ENCODE measurements at regions of chr3 and their contacts with region 1.

Region 1: DNA sequence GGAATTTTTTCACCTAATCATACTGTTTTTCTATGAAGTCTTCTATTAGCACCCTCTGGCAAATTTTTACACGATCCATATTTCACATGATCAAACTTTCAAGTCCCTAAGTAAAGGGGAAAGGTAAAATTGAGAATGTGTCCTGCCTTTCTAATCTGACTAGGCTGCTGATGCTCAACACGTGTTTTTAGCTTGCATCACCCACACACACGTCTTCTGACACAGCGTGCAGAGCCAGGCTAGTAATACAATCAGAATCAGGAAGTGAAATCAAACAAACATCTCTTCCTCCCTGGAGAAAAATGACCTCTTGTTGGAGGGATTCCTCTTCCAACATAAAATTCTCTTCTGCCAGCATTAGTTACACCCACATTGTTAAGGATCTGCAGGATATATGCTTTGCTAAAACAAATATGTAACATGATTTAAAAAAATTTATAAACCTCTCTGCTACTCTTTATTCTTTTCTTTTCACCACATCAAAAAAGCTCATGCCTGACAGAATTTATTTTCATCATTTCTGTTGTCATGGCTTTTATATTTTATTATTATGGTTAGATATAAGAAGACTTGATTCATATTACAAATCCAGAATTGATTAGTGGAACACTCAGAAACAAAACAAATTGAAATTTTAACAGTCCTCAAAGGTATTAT is 122.4 kb downstream of the RAP2B start:
- DNase-seq: peak; percentile 78
- ATAC-seq: peak; percentile 87
- H3K4me3 ChIP-seq: no peak overlapping the region
- H3K27ac ChIP-seq: peak overlapping the region; percentile 46
- H3K4me1 ChIP-seq: peaks cover 42% of the 10 kb centered on the region
- H3K27me3 ChIP-seq: no peaks in the 10 kb centered on the region
- CTCF ChIP-seq: no peak

Region 2: GRCh38 chr3:153257673-153258351 is 26.6 kb before region 1 on chr3:
- CTCF ChIA-PET with region 1: no interaction called
- POLR2A ChIA-PET with region 1: no interaction called
- intact Hi-C with region 1: loop called (anchors 1 kb)
- DNase-seq: peak; percentile 85
- ATAC-seq: peak; percentile 81
- H3K4me3 ChIP-seq: no peak overlapping the region
- H3K27ac ChIP-seq: peak overlapping the region; percentile 81
- H3K4me1 ChIP-seq: peaks cover 38% of the 10 kb centered on the region
- H3K27me3 ChIP-seq: no peaks in the 10 kb centered on the region
- CTCF ChIP-seq: no peak

Measured in PC-3 (cell line).